ENCODE measurements at regions of chr2 and their contacts with region 1.

Region 1: DNA sequence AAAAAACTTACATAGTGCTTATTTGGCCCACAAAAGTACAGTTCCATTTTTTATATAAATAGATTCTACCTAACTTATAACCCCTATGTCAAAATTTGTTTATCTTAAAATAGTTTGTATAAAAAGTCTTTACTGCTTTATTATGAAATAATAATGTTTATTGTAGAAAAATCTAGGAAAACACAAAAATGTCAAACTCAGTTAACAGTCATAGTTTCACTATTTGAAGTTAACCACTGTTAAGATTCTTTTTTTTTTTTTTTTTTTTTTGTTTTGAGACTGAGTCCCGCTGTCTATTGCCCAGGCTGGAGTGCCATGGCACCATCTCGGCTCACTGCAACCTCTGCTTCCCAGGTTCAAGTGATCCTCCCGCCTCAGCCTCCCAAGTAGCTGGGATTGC is 26.5 kb upstream of the ABI2 start:
- DNase-seq: no peak
- H3K4me3 ChIP-seq: no peak overlapping the region
- H3K27ac ChIP-seq: no peak overlapping the region
- H3K4me1 ChIP-seq: no peaks in the 10 kb centered on the region
- H3K27me3 ChIP-seq: no peaks in the 10 kb centered on the region
- CTCF ChIP-seq: no peak
- EP300 ChIP-seq: no peak
- POLR2A ChIP-seq: no peak

Region 2: GRCh38 chr2:203246646-203247045 is 55.0 kb before region 1 on chr2:
- intact Hi-C with region 1: no loop called
- DNase-seq: no peak
- H3K4me3 ChIP-seq: no peak overlapping the region
- H3K27ac ChIP-seq: no peak overlapping the region
- H3K4me1 ChIP-seq: no peaks in the 10 kb centered on the region
- H3K27me3 ChIP-seq: no peaks in the 10 kb centered on the region
- CTCF ChIP-seq: no peak
- EP300 ChIP-seq: no peak
- POLR2A ChIP-seq: no peak

Region 3: GRCh38 chr2:203673933-203674332 is 372.3 kb after region 1 on chr2:
- intact Hi-C with region 1: loop called (anchors 10 kb)
- DNase-seq: no peak
- H3K4me3 ChIP-seq: no peak overlapping the region
- H3K27ac ChIP-seq: no peak overlapping the region
- H3K4me1 ChIP-seq: no peaks in the 10 kb centered on the region
- H3K27me3 ChIP-seq: no peaks in the 10 kb centered on the region
- CTCF ChIP-seq: no peak
- EP300 ChIP-seq: no peak
- POLR2A ChIP-seq: no peak

Region 4: GRCh38 chr2:204260162-204260877 is 958.7 kb after region 1 on chr2:
- intact Hi-C with region 1: no loop called
- DNase-seq: peak; percentile 84
- H3K4me3 ChIP-seq: no peak overlapping the region
- H3K27ac ChIP-seq: no peak overlapping the region
- H3K4me1 ChIP-seq: peaks cover 0 to 20% (median 12%) of the 10 kb centered on the region in 4 donors
- H3K27me3 ChIP-seq: no peaks in the 10 kb centered on the region
- CTCF ChIP-seq: peak; percentile 54 to 89 (median 83)
- EP300 ChIP-seq: no peak
- POLR2A ChIP-seq: no peak